ENCODE measurements at regions of chr15 and their contacts with region 1.

Region 1: DNA sequence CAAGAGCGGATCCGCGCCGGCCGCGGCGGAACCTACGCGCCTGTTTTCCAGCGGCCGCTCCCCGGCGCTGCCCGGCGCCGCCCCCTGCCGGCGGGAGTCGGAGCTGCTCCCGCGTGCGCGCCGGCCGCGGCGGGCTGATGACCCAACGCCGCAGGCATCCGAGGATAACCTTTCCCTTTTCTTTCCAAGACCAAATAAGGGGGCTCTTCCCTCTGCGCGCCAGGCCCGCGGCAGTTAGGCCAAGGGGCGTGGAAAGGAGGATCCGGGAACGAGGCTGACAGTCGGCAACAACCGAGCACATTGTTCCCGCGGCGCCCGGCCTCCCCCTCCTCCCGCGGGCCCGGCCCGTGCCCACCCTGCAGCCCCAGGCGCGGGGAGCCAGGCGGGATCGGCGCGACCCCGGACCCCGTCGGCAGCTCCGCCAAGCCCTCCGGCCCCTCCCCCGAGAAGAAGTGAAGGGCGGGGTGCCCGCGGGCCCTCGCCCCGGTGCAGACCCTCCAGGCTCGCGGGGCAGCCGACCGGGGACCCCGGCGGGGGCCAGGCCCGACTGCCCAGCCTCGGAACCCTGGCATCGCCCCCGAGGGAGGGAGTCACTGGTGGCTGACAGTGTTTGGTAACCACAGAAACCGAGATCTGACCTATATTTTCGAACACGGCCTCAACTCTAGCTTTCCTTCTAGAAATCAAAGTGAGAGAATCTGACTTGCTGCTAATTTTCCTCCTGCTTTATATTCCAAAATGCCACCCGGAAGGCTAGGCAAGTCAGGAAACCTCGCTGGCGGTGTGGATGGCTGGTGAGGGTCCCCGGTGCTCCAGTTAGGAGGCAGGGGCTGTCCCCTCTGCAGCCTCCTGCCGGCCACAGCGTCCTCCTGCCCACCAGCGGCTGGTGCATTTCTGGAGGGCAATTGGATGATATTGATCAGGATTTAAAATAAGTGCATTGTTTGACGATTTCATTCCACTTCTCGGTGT is 45.6 kb upstream of the SYNM start:
- DNase-seq: peak; percentile 49

Region 2: GRCh38 chr15:98518823-98519561 is 540.3 kb before region 1 on chr15:
- in situ Hi-C with region 1: loop called (anchors 25 kb)
- DNase-seq: peak; percentile 78

Region 3: GRCh38 chr15:98978153-98978552 is 81.1 kb before region 1 on chr15:
- in situ Hi-C with region 1: no loop called
- DNase-seq: no peak

Region 4: GRCh38 chr15:98996169-98996568 is 63.1 kb before region 1 on chr15:
- in situ Hi-C with region 1: no loop called
- DNase-seq: no peak

Measured in KBM-7 (cell line).